ENCODE measurements at regions of chr1 and their contacts with region 1.

Region 1: GRCh38 chr1:50620680-50621329 is 197.6 kb upstream of the DMRTA2 start:
- DNase-seq: peak; percentile 6 to 17
- H3K4me3 ChIP-seq: no peak overlapping the region
- H3K27ac ChIP-seq: no peak overlapping the region
- H3K4me1 ChIP-seq: no peaks in the 10 kb centered on the region
- H3K27me3 ChIP-seq: no peaks in the 10 kb centered on the region
- CTCF ChIP-seq: peak in 5 of 6 experiments; percentile 33 to 51 (median 46)
- POLR2A ChIP-seq: no peak

Region 2: GRCh38 chr1:50710093-50710492 is 89.3 kb after region 1 on chr1:
- intact Hi-C with region 1: loop called (anchors 10 kb)
- DNase-seq: no peak
- H3K4me3 ChIP-seq: no peak overlapping the region
- H3K27ac ChIP-seq: no peak overlapping the region
- H3K4me1 ChIP-seq: peaks cover 3 to 7% of the 10 kb centered on the region in 2 donors
- H3K27me3 ChIP-seq: no peaks in the 10 kb centered on the region
- CTCF ChIP-seq: no peak
- POLR2A ChIP-seq: no peak